AG04450 (cell line): ENCODE measurements at regions of chr2 and their contacts with region 1.

Region 1: DNA sequence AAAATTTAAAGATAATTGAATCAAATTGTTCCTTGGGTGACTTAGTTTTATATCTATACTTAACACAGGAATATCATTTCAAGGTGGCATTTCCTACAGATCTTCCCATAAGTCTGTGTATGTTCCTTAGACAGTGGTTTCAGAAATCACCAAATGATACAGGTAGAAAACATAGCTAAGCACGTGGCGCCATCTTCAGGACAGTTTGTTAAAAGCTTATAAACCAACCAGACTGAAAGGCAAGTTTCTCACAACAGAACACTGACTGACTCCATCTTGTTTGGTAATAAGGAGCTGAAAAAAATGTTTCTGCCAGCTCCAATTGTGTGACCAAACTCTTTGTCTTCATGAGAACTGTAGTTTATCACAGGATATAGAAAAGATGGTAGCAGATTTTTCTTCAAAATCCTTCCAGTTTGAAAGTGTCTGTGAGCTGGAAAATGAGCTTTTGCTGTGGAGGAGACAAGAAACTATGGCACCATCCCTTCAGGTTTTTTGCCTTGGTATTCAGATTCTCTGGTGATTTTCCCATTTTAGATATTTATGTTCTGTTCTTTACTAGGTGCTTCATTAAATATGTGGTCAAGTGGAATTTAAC is 34.8 kb upstream of the NEUROD1 start:
- DNase-seq: peak; percentile 52
- H3K4me3 ChIP-seq: no peak overlapping the region
- H3K27ac ChIP-seq: no peak overlapping the region
- H3K27me3 ChIP-seq: no peaks in the 10 kb centered on the region
- CTCF ChIP-seq: peak; percentile 72

Region 2: DNA sequence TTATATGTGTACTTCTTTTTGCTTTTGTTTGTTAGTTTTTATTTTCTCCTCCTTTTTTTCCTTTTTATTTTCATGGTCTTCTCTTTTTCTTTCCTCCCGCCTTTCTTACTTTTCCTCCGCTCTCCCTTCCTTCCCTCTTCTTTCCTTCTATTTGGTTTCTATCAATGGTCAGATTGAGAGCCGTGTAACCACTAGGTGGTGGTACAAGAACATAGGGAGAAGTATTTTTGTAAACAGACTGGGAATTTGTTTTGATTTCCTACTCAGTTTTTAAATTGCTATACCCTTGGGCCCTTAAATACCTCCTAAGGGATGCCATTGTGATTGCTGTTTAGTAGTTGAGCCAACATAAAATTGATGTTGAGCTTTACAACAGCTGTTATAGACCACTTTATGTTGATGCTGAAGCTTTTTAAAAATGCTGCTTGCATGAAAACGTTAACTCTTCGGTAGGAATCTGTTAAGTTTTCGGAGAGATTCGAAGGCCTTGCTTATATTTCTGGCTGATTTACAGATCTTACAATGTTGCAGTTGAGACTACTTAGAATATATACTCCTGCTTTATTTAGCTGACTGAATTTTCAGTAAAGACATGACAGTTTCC is 610.5 kb before region 1 on chr2:
- CTCF ChIA-PET with region 1: interaction called, 58 read pairs
- POLR2A ChIA-PET with region 1: no interaction called
- DNase-seq: peak; percentile 46
- H3K4me3 ChIP-seq: no peak overlapping the region
- H3K27ac ChIP-seq: no peak overlapping the region
- H3K27me3 ChIP-seq: no peaks in the 10 kb centered on the region
- CTCF ChIP-seq: peak; percentile 90

Region 3: GRCh38 chr2:181573140-181573736 is 141.9 kb before region 1 on chr2:
- CTCF ChIA-PET with region 1: interaction called, 96 read pairs
- POLR2A ChIA-PET with region 1: no interaction called
- DNase-seq: no peak
- H3K4me3 ChIP-seq: no peak overlapping the region
- H3K27ac ChIP-seq: no peak overlapping the region
- H3K27me3 ChIP-seq: no peaks in the 10 kb centered on the region
- CTCF ChIP-seq: peak; percentile 62

Region 4: GRCh38 chr2:181694271-181694670 is 20.9 kb before region 1 on chr2:
- CTCF ChIA-PET with region 1: interaction called, 17 read pairs
- POLR2A ChIA-PET with region 1: no interaction called
- DNase-seq: no peak
- H3K4me3 ChIP-seq: no peak overlapping the region
- H3K27ac ChIP-seq: no peak overlapping the region
- H3K27me3 ChIP-seq: no peaks in the 10 kb centered on the region
- CTCF ChIP-seq: no peak